ENCODE measurements at regions of chr10 and their contacts with region 1.

Region 1: GRCh38 chr10:28381903-28382347 is 79.1 kb upstream of the MPP7 start:
- DNase-seq: peak; percentile 83
- H3K4me3 ChIP-seq: no peak overlapping the region
- H3K27ac ChIP-seq: no peak overlapping the region
- H3K4me1 ChIP-seq: no peaks in the 10 kb centered on the region
- H3K27me3 ChIP-seq: no peaks in the 10 kb centered on the region
- CTCF ChIP-seq: peak; percentile 78 to 85
- POLR2A ChIP-seq: no peak

Region 2: DNA sequence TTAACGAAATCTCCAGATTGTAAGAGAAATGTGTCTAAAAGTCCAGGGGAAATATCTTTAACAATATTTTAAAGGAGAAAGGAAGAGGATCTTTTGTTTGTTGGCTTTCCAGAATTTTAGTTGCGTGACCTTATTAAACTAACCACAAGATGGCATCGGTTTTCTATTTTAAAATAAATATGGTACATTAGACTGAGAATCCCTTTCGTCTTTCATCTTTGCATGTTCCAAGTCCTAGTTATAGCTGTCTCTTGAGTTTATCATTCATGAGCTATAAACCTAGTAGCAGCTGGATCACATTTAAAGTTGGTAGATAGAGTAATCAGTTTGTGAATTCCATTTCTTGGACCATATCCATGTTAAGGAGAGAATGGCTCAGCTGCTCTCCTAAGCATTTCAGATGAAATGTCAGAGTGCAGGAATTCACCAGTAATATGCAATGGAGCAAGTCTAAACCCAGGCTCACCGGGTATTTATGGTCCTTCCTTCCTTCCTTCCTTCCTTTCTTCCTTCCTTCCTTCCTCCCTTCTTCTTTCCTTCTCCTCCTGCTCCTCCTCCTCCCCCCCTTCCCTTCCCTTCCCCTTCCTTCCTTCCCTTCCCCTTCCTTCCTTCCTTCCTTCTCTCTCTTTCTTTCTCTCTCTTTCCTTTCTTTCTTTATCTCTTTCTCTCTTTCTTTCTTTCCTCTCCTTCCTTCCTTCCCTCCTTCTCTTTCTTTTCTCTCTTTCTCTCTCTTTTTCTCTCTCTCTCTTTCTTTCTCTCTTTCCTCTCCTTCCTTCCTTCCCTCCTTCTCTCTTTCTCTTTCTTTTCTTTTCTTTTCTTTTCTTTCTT is 935.6 kb before region 1 on chr10:
- CTCF ChIA-PET with region 1: interaction called, 7 read pairs
- POLR2A ChIA-PET with region 1: no interaction called
- dilution Hi-C with region 1: no loop called
- intact Hi-C with region 1: loop called (anchors 1 kb)
- DNase-seq: peak; percentile 51
- H3K4me3 ChIP-seq: no peak overlapping the region
- H3K27ac ChIP-seq: no peak overlapping the region
- H3K4me1 ChIP-seq: no peaks in the 10 kb centered on the region
- H3K27me3 ChIP-seq: no peaks in the 10 kb centered on the region
- CTCF ChIP-seq: peak; percentile 11 to 13
- POLR2A ChIP-seq: no peak

Region 3: GRCh38 chr10:27742195-27743011 is 639.5 kb before region 1 on chr10:
- CTCF ChIA-PET with region 1: interaction called, 3 read pairs
- POLR2A ChIA-PET with region 1: no interaction called
- dilution Hi-C with region 1: no loop called
- intact Hi-C with region 1: loop called (anchors 5 kb)
- DNase-seq: peak; percentile 66
- H3K4me3 ChIP-seq: peak overlapping the region; percentile 47 to 50 (median 48)
- H3K27ac ChIP-seq: no peak overlapping the region
- H3K4me1 ChIP-seq: peaks cover 25% of the 10 kb centered on the region
- H3K27me3 ChIP-seq: peaks cover 63 to 94% of the 10 kb centered on the region in 2 experiments
- CTCF ChIP-seq: peak; percentile 79 to 84
- POLR2A ChIP-seq: no peak

Region 4: GRCh38 chr10:28241741-28242399 is 140.1 kb before region 1 on chr10:
- CTCF ChIA-PET with region 1: interaction called, 5 read pairs
- POLR2A ChIA-PET with region 1: no interaction called
- dilution Hi-C with region 1: no loop called
- intact Hi-C with region 1: loop called (anchors 2 kb)
- DNase-seq: peak; percentile 65
- H3K4me3 ChIP-seq: no peak overlapping the region
- H3K27ac ChIP-seq: no peak overlapping the region
- H3K4me1 ChIP-seq: no peaks in the 10 kb centered on the region
- H3K27me3 ChIP-seq: peaks cover 10 to 16% of the 10 kb centered on the region in 2 experiments
- CTCF ChIP-seq: peak; percentile 71 to 78
- POLR2A ChIP-seq: no peak

Region 5: DNA sequence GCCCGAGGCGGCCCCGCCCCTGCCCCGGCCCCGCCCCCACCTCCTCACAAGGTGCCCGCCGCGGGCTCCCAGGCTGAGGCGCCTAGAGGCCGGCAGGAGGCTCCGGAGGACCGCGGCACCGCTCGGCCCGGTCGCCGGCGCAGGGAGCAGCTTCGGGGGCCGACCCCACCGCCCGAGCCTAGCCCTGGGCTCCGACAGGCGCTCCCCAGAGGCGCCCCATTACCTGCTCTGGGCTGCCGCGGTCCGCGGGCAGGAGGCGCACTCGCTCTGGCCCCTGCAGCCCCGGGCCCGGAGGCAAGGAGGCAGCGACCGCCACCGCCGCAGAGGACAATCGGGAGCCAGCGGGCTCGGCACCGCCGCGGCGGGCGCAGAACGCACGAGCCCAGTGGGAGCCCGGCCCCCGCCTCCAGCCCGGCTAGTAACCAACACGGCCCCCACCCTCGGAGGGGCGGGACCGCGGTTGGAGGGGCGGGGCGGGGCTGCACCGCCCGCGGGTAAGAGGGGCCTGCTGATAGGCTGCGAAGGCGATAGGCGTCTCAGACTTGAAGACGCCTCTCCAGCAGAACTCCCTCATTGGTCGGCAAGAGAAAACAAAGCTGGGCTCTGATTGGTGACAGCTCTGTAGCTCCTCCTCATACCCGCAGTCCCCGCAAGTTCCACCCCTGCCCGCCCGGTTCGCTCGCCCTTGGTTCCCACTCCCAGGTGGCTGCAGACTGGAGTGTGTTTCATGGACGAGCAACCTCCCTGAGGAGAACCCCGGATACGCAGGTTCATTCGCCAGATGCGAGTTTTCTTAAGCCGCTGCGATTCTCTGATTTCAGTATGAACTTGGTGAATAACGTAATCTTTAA is 79.1 kb before region 1 on chr10 and contains the start of gene MPP7:
- CTCF ChIA-PET with region 1: interaction called, 6 read pairs
- POLR2A ChIA-PET with region 1: no interaction called
- dilution Hi-C with region 1: no loop called
- intact Hi-C with region 1: loop called (anchors 1 kb)
- DNase-seq: peak; percentile 98
- H3K4me3 ChIP-seq: peak within 1 kb of the TSS; percentile 56 to 78 (median 63)
- H3K27ac ChIP-seq: no peak within 1 kb of the TSS
- H3K4me1 ChIP-seq: peaks cover 6% of the 10 kb centered on the region
- H3K27me3 ChIP-seq: peaks cover 23 to 41% of the 10 kb centered on the region in 2 experiments
- CTCF ChIP-seq: no peak
- POLR2A ChIP-seq: no peak
- total RNA-seq, gene MPP7: 0.73 and 1.0 TPM in 2 replicates

Region 6: GRCh38 chr10:28359334-28359733 is 22.6 kb before region 1 on chr10:
- CTCF ChIA-PET with region 1: no interaction called
- POLR2A ChIA-PET with region 1: no interaction called
- dilution Hi-C with region 1: no loop called
- intact Hi-C with region 1: no loop called
- DNase-seq: no peak
- H3K4me3 ChIP-seq: no peak overlapping the region
- H3K27ac ChIP-seq: no peak overlapping the region
- H3K4me1 ChIP-seq: no peaks in the 10 kb centered on the region
- H3K27me3 ChIP-seq: no peaks in the 10 kb centered on the region
- CTCF ChIP-seq: no peak
- POLR2A ChIP-seq: no peak

Region 7: GRCh38 chr10:28393966-28394568 is 12.1 kb after region 1 on chr10:
- CTCF ChIA-PET with region 1: interaction called, 26 read pairs
- POLR2A ChIA-PET with region 1: no interaction called
- dilution Hi-C with region 1: no loop called
- intact Hi-C with region 1: no loop called
- DNase-seq: peak; percentile 49
- H3K4me3 ChIP-seq: no peak overlapping the region
- H3K27ac ChIP-seq: no peak overlapping the region
- H3K4me1 ChIP-seq: no peaks in the 10 kb centered on the region
- H3K27me3 ChIP-seq: no peaks in the 10 kb centered on the region
- CTCF ChIP-seq: peak; percentile 88 to 94
- POLR2A ChIP-seq: no peak